Spleen (tissue), 13 donors: ENCODE measurements at regions of chr11 and their contacts with region 1.

Region 1: DNA sequence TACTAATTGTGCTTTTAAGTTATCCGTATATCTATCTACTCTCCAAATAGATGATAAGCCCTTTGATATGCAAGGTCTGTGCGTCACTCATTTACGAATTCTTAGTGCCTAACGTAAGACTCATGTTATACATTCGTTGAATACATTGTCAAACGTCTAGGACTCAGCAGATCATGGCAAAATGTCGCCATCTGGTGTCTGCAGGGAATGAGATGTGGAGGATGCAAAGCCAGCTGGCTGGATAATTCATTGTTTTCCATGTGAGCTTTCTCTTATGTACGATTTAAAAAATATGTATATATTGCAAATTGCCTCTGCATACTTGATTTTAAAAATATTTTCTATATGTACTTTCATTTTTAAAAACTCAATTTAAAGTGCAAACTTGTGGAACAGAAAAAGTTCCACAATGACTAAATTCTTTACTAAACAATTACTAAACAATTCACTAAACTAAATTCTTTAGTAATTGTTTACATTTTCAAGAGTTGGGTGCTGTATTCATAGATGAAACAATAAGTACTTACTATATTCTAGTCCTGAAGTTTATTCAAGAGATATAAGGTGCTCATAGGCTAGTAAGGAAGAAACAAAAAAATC is 33.8 kb downstream of the ZNF202 start:
- DNase-seq: no peak
- H3K4me3 ChIP-seq: no peak overlapping the region
- H3K27ac ChIP-seq: no peak overlapping the region
- H3K4me1 ChIP-seq: no peaks in the 10 kb centered on the region
- H3K27me3 ChIP-seq: peaks cover 0 to 19% (median 0%) of the 10 kb centered on the region in 7 donors
- CTCF ChIP-seq: peak in 9 of 11 experiments; percentile 2 to 69 (median 59)
- POLR2A ChIP-seq: no peak

Region 2: DNA sequence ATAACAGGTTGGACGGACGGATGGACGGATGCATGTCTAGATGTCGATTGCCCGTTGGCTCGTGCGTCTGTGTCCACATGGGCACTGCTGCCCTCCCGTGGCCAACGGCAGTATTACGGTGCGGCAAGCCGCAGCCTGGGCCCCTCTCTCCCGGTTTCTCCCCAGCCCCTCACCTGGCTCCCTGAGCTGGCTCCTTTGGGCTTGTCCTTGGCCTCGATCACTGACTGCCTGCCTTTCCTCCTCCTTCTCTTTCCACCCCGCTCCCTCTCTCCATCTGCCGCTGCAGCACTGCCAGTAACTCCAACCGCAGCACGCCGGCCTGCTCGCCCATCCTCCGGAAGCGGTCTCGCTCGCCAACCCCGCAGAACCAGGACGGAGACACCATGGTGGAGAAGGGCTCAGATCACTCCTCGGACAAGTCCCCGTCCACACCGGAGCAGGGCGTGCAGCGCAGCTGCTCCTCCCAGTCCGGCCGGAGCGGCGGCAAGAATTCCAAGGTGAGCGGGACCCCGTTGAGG is 130.6 kb before region 1 on chr11:
- intact Hi-C with region 1: loop called (anchors 10 kb)
- DNase-seq: peak; percentile 92
- H3K4me3 ChIP-seq: peak overlapping the region in 1 of 8 donors; percentile 42
- H3K27ac ChIP-seq: no peak overlapping the region
- H3K4me1 ChIP-seq: peaks cover 4 to 24% (median 18%) of the 10 kb centered on the region in 6 donors
- H3K27me3 ChIP-seq: peaks cover 0 to 16% (median 0%) of the 10 kb centered on the region in 7 donors
- CTCF ChIP-seq: peak; percentile 59 to 94 (median 81)
- POLR2A ChIP-seq: no peak

Region 3: DNA sequence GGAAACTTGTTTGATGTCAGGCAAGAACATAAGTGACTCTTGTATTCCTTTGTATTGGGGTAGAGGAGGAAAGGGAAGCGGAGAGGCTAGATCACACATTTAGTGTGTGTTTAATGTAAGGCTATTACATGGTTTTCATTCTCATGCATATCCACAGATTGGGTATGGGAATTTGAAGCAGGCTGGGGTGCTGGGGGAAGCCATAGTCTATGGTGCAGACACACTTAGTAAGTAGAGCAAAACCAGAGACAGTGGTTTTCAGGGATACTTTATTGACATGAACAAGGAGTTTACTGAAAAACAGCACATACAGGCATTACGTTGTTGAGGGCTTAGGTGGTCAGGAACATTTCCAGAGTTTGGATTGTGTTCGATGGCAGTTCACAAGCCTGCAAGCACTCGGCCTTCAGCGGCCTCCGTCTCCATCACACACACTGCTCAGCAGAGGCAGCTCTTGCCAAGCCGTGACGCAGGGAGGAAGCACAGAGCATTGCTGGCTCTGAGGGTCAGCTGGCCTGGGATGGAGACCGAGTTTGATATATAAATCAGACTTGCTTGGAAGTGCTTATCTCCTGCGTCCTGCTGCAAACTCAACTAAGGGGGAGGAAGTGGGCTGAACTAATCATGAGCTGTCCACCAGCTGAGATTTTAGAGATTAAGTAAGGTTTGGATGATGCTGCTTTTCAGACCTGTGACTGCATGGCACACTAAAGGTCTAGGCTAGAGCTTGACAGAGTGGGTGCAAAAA is 78.6 kb before region 1 on chr11:
- intact Hi-C with region 1: no loop called
- DNase-seq: no peak
- H3K4me3 ChIP-seq: no peak overlapping the region
- H3K27ac ChIP-seq: peak overlapping the region in 1 of 8 donors; percentile 0
- H3K4me1 ChIP-seq: no peaks in the 10 kb centered on the region
- H3K27me3 ChIP-seq: no peaks in the 10 kb centered on the region
- CTCF ChIP-seq: no peak
- POLR2A ChIP-seq: no peak

Region 4: GRCh38 chr11:123640677-123641494 is 66.8 kb before region 1 on chr11:
- intact Hi-C with region 1: loop called (anchors 5 kb)
- DNase-seq: no peak
- H3K4me3 ChIP-seq: no peak overlapping the region
- H3K27ac ChIP-seq: no peak overlapping the region
- H3K4me1 ChIP-seq: peaks cover 0 to 5% (median 2%) of the 10 kb centered on the region in 6 donors
- H3K27me3 ChIP-seq: peaks cover 0 to 36% (median 0%) of the 10 kb centered on the region in 7 donors
- CTCF ChIP-seq: peak in 10 of 11 experiments; percentile 22 to 76 (median 58)
- POLR2A ChIP-seq: no peak

Region 5: GRCh38 chr11:123654566-123655081 is 53.1 kb before region 1 on chr11 and contains the start of gene SCN3B:
- intact Hi-C with region 1: no loop called
- DNase-seq: no peak
- H3K4me3 ChIP-seq: peak within 1 kb of the TSS; percentile 49 to 79 (median 59)
- H3K27ac ChIP-seq: peak within 1 kb of the TSS in 4 of 8 donors; percentile 23 to 58 (median 46)
- H3K4me1 ChIP-seq: peaks cover 7 to 23% (median 16%) of the 10 kb centered on the region in 6 donors
- H3K27me3 ChIP-seq: peaks cover 0 to 67% (median 23%) of the 10 kb centered on the region in 7 donors
- CTCF ChIP-seq: no peak
- POLR2A ChIP-seq: no peak
- total RNA-seq, gene SCN3B: 0.44 to 1.7 (median 0.85) TPM

Region 6: DNA sequence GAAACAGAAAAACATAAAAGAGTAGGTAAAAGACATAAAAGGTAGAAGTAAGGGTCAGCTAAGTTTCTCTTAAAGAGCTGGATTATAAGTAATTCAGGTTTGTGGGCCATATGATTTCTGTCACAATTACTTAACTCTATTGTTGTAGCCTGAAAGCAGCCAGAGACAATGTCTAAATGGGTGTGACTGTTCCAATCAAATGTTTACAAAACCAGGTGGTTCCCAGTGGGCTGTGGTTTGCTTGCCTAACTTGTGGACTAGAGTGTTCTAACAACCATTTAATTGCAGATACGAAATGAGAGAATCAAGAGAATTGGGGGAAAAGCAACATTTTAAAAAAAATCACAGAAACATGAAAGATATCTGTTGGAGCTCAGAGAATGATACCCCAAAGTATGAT is 75.8 kb after region 1 on chr11:
- intact Hi-C with region 1: no loop called
- DNase-seq: no peak
- H3K4me3 ChIP-seq: no peak overlapping the region
- H3K27ac ChIP-seq: no peak overlapping the region
- H3K4me1 ChIP-seq: no peaks in the 10 kb centered on the region
- H3K27me3 ChIP-seq: peaks cover 0 to 4% (median 0%) of the 10 kb centered on the region in 7 donors
- CTCF ChIP-seq: no peak
- POLR2A ChIP-seq: no peak